ENCODE measurements at regions of chr21 and their contacts with region 1.

Region 1: GRCh38 chr21:32940079-32941014 is 85.4 kb upstream of the OLIG2 start:
- DNase-seq: no peak
- ATAC-seq: no peak
- H3K4me3 ChIP-seq: no peak overlapping the region
- H3K27ac ChIP-seq: no peak overlapping the region
- H3K4me1 ChIP-seq: no peaks in the 10 kb centered on the region
- H3K27me3 ChIP-seq: no peaks in the 10 kb centered on the region

Region 2: DNA sequence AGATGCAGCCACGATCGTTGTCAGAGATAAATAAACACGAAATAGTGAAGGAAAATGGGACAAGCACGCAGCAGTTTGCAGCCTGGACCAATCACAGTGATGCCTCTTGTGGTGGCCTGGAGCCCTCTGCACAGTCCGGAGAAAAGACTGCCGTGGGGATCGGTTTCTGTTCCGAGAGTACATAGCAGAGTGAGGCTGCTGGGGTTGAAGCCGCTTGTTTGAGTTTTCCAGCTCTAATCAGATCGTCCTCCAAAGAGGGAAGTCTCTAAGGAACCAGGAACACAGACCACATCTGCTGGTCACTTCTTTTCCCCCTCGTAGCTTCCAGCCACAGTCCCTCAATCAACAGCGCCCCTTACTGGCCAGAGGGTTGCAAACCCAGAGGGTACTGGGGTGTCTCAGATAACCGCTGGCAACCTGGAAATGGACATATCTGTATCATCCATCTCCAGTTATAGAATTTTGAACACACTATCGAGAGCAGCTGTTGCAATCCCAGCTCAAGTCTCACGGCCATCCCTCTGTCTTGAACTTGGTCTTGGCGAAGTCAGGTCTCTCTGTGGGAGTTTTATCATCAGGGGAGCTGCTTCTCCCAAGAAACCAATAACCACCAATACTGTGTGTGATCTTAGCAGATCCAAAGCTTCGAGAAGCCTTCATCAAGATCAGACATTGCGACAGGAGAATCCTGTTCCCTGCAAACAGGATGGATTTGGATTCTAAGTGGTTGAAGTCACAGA is 187.0 kb after region 1 on chr21:
- intact Hi-C with region 1: loop called in 1 of 4 experiments (anchors 5 kb)
- DNase-seq: peak; percentile 55 to 84 (median 80)
- ATAC-seq: peak; percentile 82 to 86
- H3K4me3 ChIP-seq: peak overlapping the region; percentile 9
- H3K27ac ChIP-seq: no peak overlapping the region
- H3K4me1 ChIP-seq: no peaks in the 10 kb centered on the region
- H3K27me3 ChIP-seq: peaks cover 3% of the 10 kb centered on the region